Posterior vena cava (tissue), 2 donors: ENCODE measurements at regions of chr11 and their contacts with region 1.

Region 1: DNA sequence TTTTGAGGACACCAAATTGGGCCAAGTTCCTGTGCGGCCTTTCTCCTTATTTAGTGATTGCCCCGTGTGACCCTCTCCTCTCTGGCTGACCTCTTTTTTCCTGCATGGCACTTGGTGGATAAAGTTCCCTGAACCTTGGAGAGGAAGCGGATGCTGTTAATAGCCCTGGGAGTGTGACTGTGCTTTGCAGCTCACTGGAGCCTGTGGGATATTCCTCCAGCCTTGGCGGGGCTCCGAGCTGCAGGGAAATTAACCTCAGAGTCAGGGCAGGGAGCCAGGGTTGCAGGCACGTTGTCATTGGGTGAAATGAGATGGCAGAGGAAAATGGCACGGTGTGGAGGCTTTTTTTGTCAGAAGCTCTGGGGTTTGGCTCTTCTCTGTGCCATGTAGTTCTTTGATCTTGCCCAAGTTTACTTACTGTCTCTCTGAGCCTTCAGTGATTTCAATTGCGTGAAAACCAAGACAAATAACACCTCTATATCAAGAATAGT is 965 bp downstream of the OR9Q1 start:
- DNase-seq: peak; percentile 92

Region 2: DNA sequence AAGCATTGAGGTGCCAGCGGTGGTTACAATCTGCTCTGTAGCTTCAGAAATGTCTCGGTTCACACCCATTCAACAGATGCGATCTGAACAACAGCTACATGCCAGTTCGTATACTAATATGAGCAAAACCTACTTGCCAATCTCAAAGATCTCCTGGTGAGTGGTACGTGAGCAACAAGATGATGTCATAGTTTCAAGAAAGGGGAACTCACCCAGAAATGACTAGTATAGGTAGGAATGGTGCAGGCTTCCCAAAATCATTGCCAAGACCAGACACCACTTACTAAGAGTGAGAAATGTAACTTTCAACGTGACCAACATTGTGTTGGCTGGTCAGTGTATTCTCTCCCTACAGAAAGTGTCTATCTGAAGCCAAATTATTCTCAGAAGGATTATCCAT is 37.2 kb after region 1 on chr11:
- intact Hi-C with region 1: loop called in 1 of 2 experiments (anchors 5 kb)
- DNase-seq: no peak

Region 3: DNA sequence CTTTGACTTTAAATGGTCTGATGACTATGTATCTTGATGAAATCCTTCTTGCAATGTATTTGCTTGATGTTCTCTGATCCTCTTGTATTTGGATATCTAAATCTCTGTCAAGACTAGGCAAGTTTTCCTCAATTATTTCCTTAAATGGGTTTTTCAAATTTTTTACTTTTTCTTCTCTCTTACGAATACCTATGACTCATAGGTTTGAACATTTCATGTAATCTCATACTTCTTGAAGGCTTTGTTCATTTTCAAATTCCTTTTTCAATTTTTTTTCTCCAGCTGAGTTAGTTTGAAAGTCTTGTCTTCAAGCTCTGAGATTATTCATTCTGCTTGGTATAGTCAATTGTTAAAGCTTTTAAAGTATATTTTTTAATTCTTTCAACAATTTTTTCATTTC is 230.3 kb after region 1 on chr11:
- intact Hi-C with region 1: no loop called
- DNase-seq: no peak